ENCODE measurements at regions of chrX and their contacts with region 1.

Region 1: DNA sequence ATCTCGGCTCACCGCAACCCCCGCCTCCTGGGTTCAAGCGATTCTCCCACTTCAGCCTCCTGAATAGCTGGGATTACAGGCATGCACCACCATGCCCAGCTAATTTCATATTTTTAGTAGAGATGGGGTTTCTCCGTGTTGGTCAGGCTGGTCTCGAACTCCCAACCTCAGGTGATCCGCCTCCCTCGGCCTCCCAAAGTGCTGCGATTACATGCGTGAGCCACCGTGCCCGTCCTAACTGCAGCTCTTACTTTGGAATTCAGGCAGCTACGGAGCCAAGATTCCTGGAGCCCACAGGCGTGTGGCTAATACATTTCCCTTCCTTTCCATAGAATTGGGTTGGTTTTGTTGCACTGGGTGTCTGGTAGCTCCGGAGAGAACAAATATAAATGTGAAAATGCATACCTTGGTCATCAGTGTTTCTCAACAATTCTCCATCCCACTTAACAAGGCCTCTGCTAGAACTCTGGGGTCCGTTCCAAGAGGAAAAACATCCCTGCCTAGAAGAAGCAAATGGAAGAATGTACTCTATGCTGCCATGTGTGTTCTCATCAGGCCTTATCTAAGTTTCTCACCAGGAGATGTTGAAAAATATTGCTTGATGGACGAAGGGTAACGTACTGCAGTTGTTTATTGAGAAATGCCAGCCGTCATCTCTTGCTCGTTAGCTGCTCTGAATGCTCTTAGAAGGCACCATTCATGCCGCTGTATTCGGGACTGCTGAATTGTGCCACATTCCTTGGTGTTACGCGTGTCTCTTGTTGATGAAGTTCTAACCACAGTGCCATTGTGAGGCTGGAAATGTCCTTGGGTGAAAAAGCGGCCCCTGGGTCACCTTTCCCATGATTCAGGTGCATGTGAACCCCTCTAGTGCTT is 50.6 kb upstream of the CD99 start:
- DNase-seq: no peak
- H3K4me3 ChIP-seq: no peak overlapping the region
- H3K27ac ChIP-seq: no peak overlapping the region
- H3K4me1 ChIP-seq: no peaks in the 10 kb centered on the region
- H3K27me3 ChIP-seq: no peaks in the 10 kb centered on the region
- CTCF ChIP-seq: no peak
- POLR2A ChIP-seq: no peak

Region 2: GRCh38 chrX:1679238-1679637 is 961.3 kb before region 1 on chrX:
- intact Hi-C with region 1: no loop called
- DNase-seq: peak in 1 of 7 donors; percentile 9
- H3K4me3 ChIP-seq: no peak overlapping the region
- H3K27ac ChIP-seq: no peak overlapping the region
- H3K4me1 ChIP-seq: no peaks in the 10 kb centered on the region
- H3K27me3 ChIP-seq: no peaks in the 10 kb centered on the region
- CTCF ChIP-seq: no peak
- POLR2A ChIP-seq: no peak

Region 3: GRCh38 chrX:2819345-2820135 is 179.0 kb after region 1 on chrX:
- intact Hi-C with region 1: loop called (anchors 5 to 10 kb)
- DNase-seq: peak in 1 of 7 donors; percentile 21
- H3K4me3 ChIP-seq: no peak overlapping the region
- H3K27ac ChIP-seq: no peak overlapping the region
- H3K4me1 ChIP-seq: no peaks in the 10 kb centered on the region
- H3K27me3 ChIP-seq: peaks cover 6% of the 10 kb centered on the region
- CTCF ChIP-seq: peak in 5 of 6 experiments; percentile 14 to 44 (median 33)
- POLR2A ChIP-seq: no peak

Measured in adrenal gland (tissue), 19 donors.